CD4-positive, alpha-beta T cell (primary cell): ENCODE measurements at regions of chr16 and their contacts with region 1.

Region 1: GRCh38 chr16:58198022-58198683 is at the start of gene CSNK2A2:
- DNase-seq: peak; percentile 48 to 88 (median 66)
- ATAC-seq: peak; percentile 94
- H3K4me3 ChIP-seq: peak within 1 kb of the TSS; percentile 65
- H3K4me3 Mint-ChIP-seq: peak within 1 kb of the TSS; percentile 90
- H3K27ac ChIP-seq: no peak within 1 kb of the TSS
- H3K27ac Mint-ChIP-seq: peak within 1 kb of the TSS; percentile 82
- H3K4me1 ChIP-seq: peaks cover 19% of the 10 kb centered on the region
- H3K4me1 Mint-ChIP-seq: peaks cover 54% of the 10 kb centered on the region
- H3K27me3 ChIP-seq: peaks cover 5% of the 10 kb centered on the region in 2 experiments
- H3K27me3 Mint-ChIP-seq: peaks cover 7% of the 10 kb centered on the region
- CTCF ChIP-seq: no peak
- total RNA-seq, gene CSNK2A2: 49.0 to 51.0 TPM

Region 2: GRCh38 chr16:56450986-56451752 is 1747.0 kb before region 1 on chr16 and contains the starts of genes NUDT21 and OGFOD1:
- CTCF ChIA-PET with region 1: no interaction called
- POLR2A ChIA-PET with region 1: no interaction called
- intact Hi-C with region 1: loop called in 1 of 2 experiments (anchors 5 kb)
- DNase-seq: peak; percentile 81 to 98 (median 88)
- ATAC-seq: peak; percentile 98
- H3K4me3 ChIP-seq: peak within 1 kb of the TSS; percentile 91
- H3K4me3 Mint-ChIP-seq: peak within 1 kb of the TSS; percentile 92
- H3K27ac ChIP-seq: peak within 1 kb of the TSS; percentile 58 to 80
- H3K27ac Mint-ChIP-seq: peak within 1 kb of the TSS; percentile 83
- H3K4me1 ChIP-seq: peaks cover 20% of the 10 kb centered on the region
- H3K4me1 Mint-ChIP-seq: peaks cover 70% of the 10 kb centered on the region
- H3K27me3 ChIP-seq: no peaks in the 10 kb centered on the region
- H3K27me3 Mint-ChIP-seq: no peaks in the 10 kb centered on the region
- CTCF ChIP-seq: no peak
- total RNA-seq, gene NUDT21: 89.6 to 96.6 TPM
- total RNA-seq, gene OGFOD1: 14.6 to 14.8 TPM

Region 3: GRCh38 chr16:58000706-58001676 is 197.2 kb before region 1 on chr16 and contains the start of gene USB1:
- CTCF ChIA-PET with region 1: no interaction called
- POLR2A ChIA-PET with region 1: no interaction called
- intact Hi-C with region 1: loop called in 1 of 2 experiments (anchors 5 kb)
- DNase-seq: peak; percentile 63 to 92 (median 80)
- ATAC-seq: peak; percentile 73
- H3K4me3 ChIP-seq: peak within 1 kb of the TSS; percentile 96
- H3K4me3 Mint-ChIP-seq: peak within 1 kb of the TSS; percentile 92
- H3K27ac ChIP-seq: peak within 1 kb of the TSS; percentile 79 to 86
- H3K27ac Mint-ChIP-seq: peak within 1 kb of the TSS; percentile 87
- H3K4me1 ChIP-seq: peaks cover 59% of the 10 kb centered on the region
- H3K4me1 Mint-ChIP-seq: peaks cover 57% of the 10 kb centered on the region
- H3K27me3 ChIP-seq: no peaks in the 10 kb centered on the region
- H3K27me3 Mint-ChIP-seq: no peaks in the 10 kb centered on the region
- CTCF ChIP-seq: peak; percentile 68
- total RNA-seq, gene USB1: 22.4 to 25.7 TPM

Region 4: DNA sequence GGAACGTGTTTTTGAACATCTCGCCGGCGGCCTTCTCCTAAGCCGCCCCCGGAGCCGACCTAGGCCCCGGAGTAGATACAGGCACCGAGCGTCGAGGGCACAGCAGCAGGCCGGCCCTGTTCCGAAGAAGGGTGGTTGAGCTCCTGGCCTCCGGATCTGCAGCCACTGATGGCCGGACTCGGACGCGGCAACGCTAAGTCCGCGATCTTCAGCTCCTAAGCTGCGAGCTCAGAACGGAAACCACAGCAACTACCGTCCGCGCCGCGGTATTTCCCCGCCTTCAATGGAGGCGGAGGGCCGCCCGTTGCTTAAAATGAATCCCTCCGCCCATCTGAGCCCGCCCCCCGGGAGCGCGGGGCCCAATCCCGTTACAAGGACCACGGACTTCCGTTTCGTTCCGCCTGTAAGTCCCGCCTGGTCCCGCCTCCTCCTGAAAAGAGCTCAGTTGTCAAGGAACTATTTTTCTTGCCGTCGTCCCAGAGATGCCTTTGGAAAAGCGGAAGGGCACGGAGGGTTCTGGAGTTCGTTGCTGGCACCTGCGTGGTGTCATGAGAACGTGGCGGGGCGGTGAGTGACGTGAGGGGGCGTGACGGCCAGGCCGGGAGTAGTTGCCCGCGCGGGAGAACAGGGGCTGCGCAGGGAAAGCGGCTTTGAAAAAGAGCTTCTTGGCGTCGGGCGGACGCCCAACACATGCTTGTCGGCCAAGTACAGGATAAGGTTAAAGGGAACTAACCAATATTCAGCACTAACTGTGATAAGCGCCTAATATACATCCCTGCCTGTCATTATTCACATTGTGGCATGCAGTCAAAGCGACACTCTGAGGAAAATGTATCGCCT is 68.8 kb before region 1 on chr16 and contains the start of gene CFAP20:
- CTCF ChIA-PET with region 1: no interaction called
- POLR2A ChIA-PET with region 1: interaction called, 13 read pairs
- intact Hi-C with region 1: loop called (anchors 2 to 5 kb)
- DNase-seq: peak; percentile 92 to 98 (median 96)
- ATAC-seq: peak; percentile 84
- H3K4me3 ChIP-seq: peak within 1 kb of the TSS; percentile 99
- H3K4me3 Mint-ChIP-seq: peak within 1 kb of the TSS; percentile 91
- H3K27ac ChIP-seq: peak within 1 kb of the TSS; percentile 84 to 88
- H3K27ac Mint-ChIP-seq: peak within 1 kb of the TSS; percentile 88
- H3K4me1 ChIP-seq: peaks cover 40% of the 10 kb centered on the region
- H3K4me1 Mint-ChIP-seq: peaks cover 47% of the 10 kb centered on the region
- H3K27me3 ChIP-seq: no peaks in the 10 kb centered on the region
- H3K27me3 Mint-ChIP-seq: no peaks in the 10 kb centered on the region
- CTCF ChIP-seq: no peak
- total RNA-seq, gene CFAP20: 250 to 261 TPM

Region 5: GRCh38 chr16:58222532-58223316 is 24.6 kb after region 1 on chr16:
- CTCF ChIA-PET with region 1: no interaction called
- POLR2A ChIA-PET with region 1: no interaction called
- intact Hi-C with region 1: no loop called
- DNase-seq: no peak
- ATAC-seq: no peak
- H3K4me3 ChIP-seq: no peak overlapping the region
- H3K4me3 Mint-ChIP-seq: no peak overlapping the region
- H3K27ac ChIP-seq: no peak overlapping the region
- H3K27ac Mint-ChIP-seq: no peak overlapping the region
- H3K4me1 ChIP-seq: no peaks in the 10 kb centered on the region
- H3K4me1 Mint-ChIP-seq: no peaks in the 10 kb centered on the region
- H3K27me3 ChIP-seq: peaks cover 3% of the 10 kb centered on the region in 2 experiments
- H3K27me3 Mint-ChIP-seq: peaks cover 23% of the 10 kb centered on the region
- CTCF ChIP-seq: no peak

Region 6: GRCh38 chr16:58249780-58250478 is 51.8 kb after region 1 on chr16:
- CTCF ChIA-PET with region 1: no interaction called
- POLR2A ChIA-PET with region 1: no interaction called
- intact Hi-C with region 1: loop called in 1 of 2 experiments (anchors 2 kb)
- DNase-seq: peak; percentile 65 to 94 (median 82)
- ATAC-seq: peak; percentile 98
- H3K4me3 ChIP-seq: peak overlapping the region; percentile 73
- H3K4me3 Mint-ChIP-seq: peak overlapping the region; percentile 84
- H3K27ac ChIP-seq: no peak overlapping the region
- H3K27ac Mint-ChIP-seq: no peak overlapping the region
- H3K4me1 ChIP-seq: peaks cover 16% of the 10 kb centered on the region
- H3K4me1 Mint-ChIP-seq: peaks cover 14% of the 10 kb centered on the region
- H3K27me3 ChIP-seq: no peaks in the 10 kb centered on the region
- H3K27me3 Mint-ChIP-seq: peaks cover 8% of the 10 kb centered on the region
- CTCF ChIP-seq: no peak

Region 7: GRCh38 chr16:58515125-58515870 is 317.1 kb after region 1 on chr16 and contains the start of gene SETD6:
- CTCF ChIA-PET with region 1: interaction called, 3 read pairs
- POLR2A ChIA-PET with region 1: no interaction called
- intact Hi-C with region 1: loop called in 1 of 2 experiments (anchors 5 kb)
- DNase-seq: peak in 13 of 14 experiments; percentile 31 to 80 (median 65)
- ATAC-seq: peak; percentile 53
- H3K4me3 ChIP-seq: peak within 1 kb of the TSS; percentile 75
- H3K4me3 Mint-ChIP-seq: peak within 1 kb of the TSS; percentile 90
- H3K27ac ChIP-seq: peak within 1 kb of the TSS; percentile 66 to 72
- H3K27ac Mint-ChIP-seq: peak within 1 kb of the TSS; percentile 90
- H3K4me1 ChIP-seq: peaks cover 21% of the 10 kb centered on the region
- H3K4me1 Mint-ChIP-seq: peaks cover 38% of the 10 kb centered on the region
- H3K27me3 ChIP-seq: no peaks in the 10 kb centered on the region
- H3K27me3 Mint-ChIP-seq: no peaks in the 10 kb centered on the region
- CTCF ChIP-seq: no peak
- total RNA-seq, gene SETD6: 21.9 to 25.5 TPM